Panc1 (cell line): ENCODE measurements at regions of chr2 and their contacts with region 1.

Region 1: GRCh38 chr2:70709275-70710037 is 58.5 kb downstream of the ADD2 start:
- DNase-seq: no peak
- ATAC-seq: no peak
- H3K4me3 ChIP-seq: no peak overlapping the region
- H3K27ac ChIP-seq: no peak overlapping the region
- H3K4me1 ChIP-seq: no peaks in the 10 kb centered on the region
- H3K27me3 ChIP-seq: peaks cover 7% of the 10 kb centered on the region; the same call in 1 of the 2 replicates
- CTCF ChIP-seq: no peak

Region 2: GRCh38 chr2:70686577-70687460 is 22.6 kb before region 1 on chr2:
- CTCF ChIA-PET with region 1: interaction called, 13 read pairs
- POLR2A ChIA-PET with region 1: no interaction called
- in situ Hi-C with region 1: no loop called
- intact Hi-C with region 1: no loop called
- DNase-seq: no peak
- ATAC-seq: peak; percentile 53; the same call in 1 of the 2 replicates
- H3K4me3 ChIP-seq: no peak overlapping the region
- H3K27ac ChIP-seq: no peak overlapping the region
- H3K4me1 ChIP-seq: no peaks in the 10 kb centered on the region
- H3K27me3 ChIP-seq: peaks cover 2% of the 10 kb centered on the region; the same call in 1 of the 2 replicates
- CTCF ChIP-seq: no peak; the same call in 1 of the 2 replicates

Region 3: GRCh38 chr2:70726947-70727725 is 17.7 kb after region 1 on chr2:
- CTCF ChIA-PET with region 1: no interaction called
- POLR2A ChIA-PET with region 1: no interaction called
- in situ Hi-C with region 1: no loop called
- intact Hi-C with region 1: no loop called
- DNase-seq: no peak
- ATAC-seq: no peak
- H3K4me3 ChIP-seq: no peak overlapping the region
- H3K27ac ChIP-seq: no peak overlapping the region
- H3K4me1 ChIP-seq: no peaks in the 10 kb centered on the region
- H3K27me3 ChIP-seq: peaks cover 2% of the 10 kb centered on the region; the same call in 1 of the 2 replicates
- CTCF ChIP-seq: no peak